ENCODE measurements at regions of chr5 and their contacts with region 1.

Region 1: GRCh38 chr5:157157293-157157891 is 8.7 kb downstream of the GARIN3 start:
- DNase-seq: no peak
- ATAC-seq: no peak
- H3K4me3 Mint-ChIP-seq: no peak overlapping the region
- H3K27ac Mint-ChIP-seq: peak overlapping the region; percentile 30
- H3K4me1 Mint-ChIP-seq: peaks cover 60% of the 10 kb centered on the region
- H3K27me3 Mint-ChIP-seq: no peaks in the 10 kb centered on the region

Region 2: GRCh38 chr5:157172403-157172802 is 15.0 kb after region 1 on chr5:
- POLR2A ChIA-PET with region 1: interaction called, 21 read pairs
- DNase-seq: peak; percentile 76
- ATAC-seq: peak; percentile 99
- H3K4me3 Mint-ChIP-seq: peak overlapping the region; percentile 73
- H3K27ac Mint-ChIP-seq: peak overlapping the region; percentile 88
- H3K4me1 Mint-ChIP-seq: peaks cover 54% of the 10 kb centered on the region
- H3K27me3 Mint-ChIP-seq: no peaks in the 10 kb centered on the region